Right ventricle myocardium inferior (tissue), 1 donor: ENCODE measurements at regions of chr16 and their contacts with region 1.

Region 1: DNA sequence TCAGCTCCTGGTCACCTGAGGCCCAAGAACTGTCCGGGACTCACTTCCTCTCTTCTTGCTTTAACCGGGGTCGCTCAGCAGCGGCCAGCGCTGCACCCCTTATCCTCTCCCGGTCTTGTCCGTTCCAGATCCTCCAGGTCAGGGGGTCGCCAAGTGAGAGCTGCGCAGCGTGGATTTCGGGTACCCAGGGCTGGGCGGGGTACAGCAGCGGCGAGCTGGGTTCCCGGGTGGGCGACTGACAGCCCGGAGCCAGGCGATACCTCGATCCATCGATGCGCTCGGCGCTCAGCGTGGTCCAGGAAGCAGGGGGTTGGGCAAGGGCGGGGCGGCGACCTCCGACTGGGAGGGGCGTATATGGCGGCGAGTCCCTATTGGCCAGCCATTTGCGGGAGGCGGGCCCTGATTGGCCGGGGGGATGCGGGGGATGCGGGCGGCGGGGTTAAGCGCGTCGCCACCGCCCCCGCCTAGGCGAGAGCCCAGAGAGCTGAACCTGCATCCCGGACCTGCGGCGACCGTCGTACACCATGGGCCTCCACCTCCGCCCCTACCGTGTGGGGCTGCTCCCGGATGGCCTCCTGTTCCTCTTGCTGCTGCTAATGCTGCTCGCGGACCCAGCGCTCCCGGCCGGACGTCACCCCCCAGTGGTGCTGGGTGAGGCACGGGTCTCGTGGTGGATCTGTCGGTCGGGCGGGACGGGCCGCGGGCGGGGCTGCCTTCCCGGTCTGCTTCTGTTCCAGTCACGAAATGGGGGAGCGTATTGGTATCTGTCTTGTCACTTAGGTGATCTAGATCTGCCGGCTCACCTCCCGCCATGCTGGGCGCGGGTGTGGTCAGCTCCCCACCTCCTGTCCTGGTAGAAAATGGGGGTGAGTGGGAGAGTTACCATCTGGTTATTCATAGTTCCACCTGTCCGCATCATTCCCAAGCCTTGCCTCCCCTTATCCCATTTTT is at the start of gene PLA2G15:
- DNase-seq: peak; percentile 98
- ATAC-seq: peak; percentile 96
- total RNA-seq, gene PLA2G15: 43.8 TPM

Region 2: DNA sequence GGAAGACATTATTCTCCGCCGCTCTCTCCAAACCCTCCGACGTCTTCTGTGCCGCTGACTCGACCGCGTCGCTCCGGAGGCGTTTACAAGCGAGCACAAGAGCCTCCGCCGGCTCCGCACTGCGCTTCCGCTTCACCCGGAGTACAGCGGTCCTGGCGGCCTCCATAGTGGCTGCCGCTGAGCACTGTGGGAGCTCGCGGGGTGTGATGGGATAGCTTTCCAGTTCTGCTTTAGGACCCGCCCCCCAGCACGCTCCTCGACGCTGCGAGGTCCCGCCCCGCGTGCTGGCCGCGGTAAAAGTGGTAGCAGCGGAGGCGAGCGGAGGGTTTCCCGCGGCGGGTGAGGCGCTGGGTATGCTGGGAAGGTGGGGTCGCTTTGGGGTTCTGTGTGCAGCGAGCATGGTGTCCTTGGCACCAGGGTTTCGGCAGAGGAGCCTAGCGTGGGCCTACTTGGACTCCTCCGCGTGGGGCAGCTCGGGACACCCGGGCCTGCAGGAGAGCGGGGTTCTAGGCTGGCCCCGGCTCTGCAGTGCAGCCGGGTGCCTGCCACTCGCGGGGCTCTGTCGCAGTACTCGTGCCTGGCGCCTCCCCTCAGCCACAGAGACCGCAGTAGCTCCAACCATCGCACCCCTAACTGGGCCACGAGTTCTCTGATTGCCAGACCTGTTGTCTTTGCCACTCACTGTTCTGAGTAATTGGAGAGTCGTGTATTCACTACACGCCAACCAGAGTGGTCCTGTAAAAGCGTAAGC is 65.8 kb after region 1 on chr16 and contains the starts of genes PRMT7 and SLC7A6OS:
- intact Hi-C with region 1: loop called (anchors 5 kb)
- DNase-seq: peak; percentile 97
- ATAC-seq: peak; percentile 100
- total RNA-seq, gene PRMT7: 28.9 TPM
- total RNA-seq, gene SLC7A6OS: 12.4 TPM